Naive thymus-derived CD4-positive, alpha-beta T cell (primary cell): ENCODE measurements at regions of chr5 and their contacts with region 1.

Region 1: DNA sequence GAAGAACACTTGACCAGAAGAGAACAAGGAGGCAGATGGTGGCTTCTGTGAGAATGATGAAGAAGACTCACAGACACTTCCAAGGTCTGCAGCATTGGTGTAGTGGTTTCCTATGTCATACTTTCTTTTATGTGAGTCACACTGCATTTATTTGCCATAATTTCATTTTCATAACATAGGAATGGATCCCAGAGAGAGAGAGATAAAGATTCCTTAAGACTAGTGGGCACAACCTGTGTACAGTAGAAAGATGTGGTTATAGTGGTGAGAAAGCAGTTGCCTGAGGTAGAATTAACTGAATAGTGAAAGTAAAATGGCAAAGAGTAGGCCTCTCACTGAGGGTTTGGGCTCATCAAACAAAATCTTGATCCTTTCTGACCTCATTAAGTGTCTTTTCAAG is 7.6 kb upstream of the CCDC152 start:
- DNase-seq: no peak
- ATAC-seq: peak; percentile 49
- H3K4me3 ChIP-seq: no peak overlapping the region
- H3K4me3 Mint-ChIP-seq: no peak overlapping the region
- H3K27ac ChIP-seq: no peak overlapping the region
- H3K27ac Mint-ChIP-seq: peak overlapping the region in 2 of 9 donors; percentile 1 to 63
- H3K4me1 ChIP-seq: peaks cover 0 to 6% of the 10 kb centered on the region in 2 donors
- H3K4me1 Mint-ChIP-seq: peaks cover 0 to 6% (median 0%) of the 10 kb centered on the region in 7 donors
- H3K27me3 ChIP-seq: no peaks in the 10 kb centered on the region
- H3K27me3 Mint-ChIP-seq: peaks cover 0 to 5% (median 0%) of the 10 kb centered on the region in 5 donors

Region 2: DNA sequence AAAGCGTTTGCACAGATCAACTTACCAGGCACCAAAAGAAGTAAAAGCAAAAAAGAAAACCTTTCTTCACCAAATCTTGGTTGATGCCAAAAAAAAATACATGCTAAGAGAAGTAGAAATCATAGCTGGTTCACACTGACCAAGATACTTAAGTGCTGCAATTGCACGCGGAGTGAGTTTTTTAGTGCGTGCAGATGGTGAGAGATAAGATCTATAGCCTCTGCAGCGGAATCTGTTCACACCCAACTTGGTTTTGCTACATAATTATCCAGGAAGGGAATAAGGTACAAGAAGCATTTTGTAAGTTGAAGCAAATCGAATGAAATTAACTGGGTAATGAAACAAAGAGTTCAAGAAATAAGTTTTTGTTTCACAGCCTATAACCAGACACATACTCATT is 28.8 kb before region 1 on chr5:
- CTCF ChIA-PET with region 1: no interaction called
- POLR2A ChIA-PET with region 1: no interaction called
- intact Hi-C with region 1: loop called in 1 of 2 experiments (anchors 2 kb)
- DNase-seq: no peak
- ATAC-seq: peak; percentile 48
- H3K4me3 ChIP-seq: no peak overlapping the region
- H3K4me3 Mint-ChIP-seq: peak overlapping the region in 1 of 10 donors; percentile 70
- H3K27ac ChIP-seq: no peak overlapping the region
- H3K27ac Mint-ChIP-seq: peak overlapping the region in 1 of 9 donors; percentile 35
- H3K4me1 ChIP-seq: peaks cover 0 to 13% of the 10 kb centered on the region in 2 donors
- H3K4me1 Mint-ChIP-seq: peaks cover 0 to 26% (median 12%) of the 10 kb centered on the region in 7 donors
- H3K27me3 ChIP-seq: peaks cover 0 to 4% of the 10 kb centered on the region in 2 donors
- H3K27me3 Mint-ChIP-seq: peaks cover 16 to 59% (median 35%) of the 10 kb centered on the region in 5 donors